ENCODE measurements at regions of chr9 and their contacts with region 1.

Region 1: DNA sequence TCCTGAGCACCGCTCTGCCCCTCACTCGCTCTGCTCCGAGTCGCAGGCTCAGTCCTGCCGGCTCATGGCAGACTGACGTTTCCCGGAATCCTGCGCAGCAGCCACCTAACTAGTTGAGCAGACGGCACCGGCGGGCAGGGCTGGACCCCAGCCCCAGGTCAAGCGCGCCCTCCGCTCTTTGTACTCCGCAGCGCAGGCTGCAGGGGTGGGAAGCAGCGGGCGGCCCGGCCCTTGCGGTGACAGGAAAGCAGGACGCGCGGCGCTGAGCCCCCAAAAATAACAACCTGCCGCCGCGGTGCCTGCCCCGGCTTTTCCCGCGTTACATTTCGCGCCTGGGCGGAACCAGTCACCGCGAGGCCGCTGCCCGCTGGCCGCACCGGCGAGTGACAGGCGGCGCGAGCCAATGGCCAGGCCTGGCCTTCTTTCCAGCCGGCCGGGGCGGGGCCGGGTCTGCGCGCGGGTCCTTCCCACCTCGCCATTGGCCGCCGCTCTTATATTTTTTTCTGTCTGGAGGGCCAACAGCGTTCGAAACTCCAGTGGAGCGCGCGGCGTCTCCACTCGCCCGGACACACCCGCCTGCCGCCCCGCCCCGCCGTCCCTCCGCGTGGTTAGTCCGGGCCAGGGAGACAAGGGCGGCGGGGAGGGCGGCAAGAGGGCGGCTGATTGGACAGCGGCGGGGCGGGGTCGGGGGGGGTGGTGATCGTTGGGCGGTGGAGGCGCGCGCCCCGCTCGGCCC is at the start of gene ZNF367:
- DNase-seq: peak; percentile 99
- ATAC-seq: peak; percentile 93
- total RNA-seq, gene ZNF367: 4.3 TPM

Region 2: GRCh38 chr9:95764533-95765319 is 653.5 kb before region 1 on chr9:
- intact Hi-C with region 1: no loop called
- DNase-seq: no peak
- ATAC-seq: no peak

Region 3: DNA sequence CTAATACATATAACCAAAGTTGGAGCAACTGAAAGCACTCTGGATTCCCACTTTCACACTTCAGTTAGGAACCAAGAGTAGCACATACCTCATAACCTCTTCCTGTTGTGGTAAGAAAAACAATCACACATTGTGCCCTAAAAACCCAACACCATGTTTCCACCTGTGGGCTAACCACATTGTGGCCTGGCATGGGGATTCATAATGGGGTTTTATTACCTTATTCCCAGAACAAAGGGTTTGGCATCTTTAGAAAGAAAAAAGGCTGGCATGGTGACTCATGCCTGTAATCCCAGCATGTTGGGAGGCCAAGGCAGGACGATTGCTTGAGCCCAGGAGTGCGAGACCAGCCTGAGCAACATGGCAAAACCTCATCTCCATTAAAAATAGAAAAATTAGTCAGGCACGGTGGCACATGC is 176.8 kb before region 1 on chr9:
- intact Hi-C with region 1: no loop called
- DNase-seq: no peak
- ATAC-seq: no peak

Region 4: DNA sequence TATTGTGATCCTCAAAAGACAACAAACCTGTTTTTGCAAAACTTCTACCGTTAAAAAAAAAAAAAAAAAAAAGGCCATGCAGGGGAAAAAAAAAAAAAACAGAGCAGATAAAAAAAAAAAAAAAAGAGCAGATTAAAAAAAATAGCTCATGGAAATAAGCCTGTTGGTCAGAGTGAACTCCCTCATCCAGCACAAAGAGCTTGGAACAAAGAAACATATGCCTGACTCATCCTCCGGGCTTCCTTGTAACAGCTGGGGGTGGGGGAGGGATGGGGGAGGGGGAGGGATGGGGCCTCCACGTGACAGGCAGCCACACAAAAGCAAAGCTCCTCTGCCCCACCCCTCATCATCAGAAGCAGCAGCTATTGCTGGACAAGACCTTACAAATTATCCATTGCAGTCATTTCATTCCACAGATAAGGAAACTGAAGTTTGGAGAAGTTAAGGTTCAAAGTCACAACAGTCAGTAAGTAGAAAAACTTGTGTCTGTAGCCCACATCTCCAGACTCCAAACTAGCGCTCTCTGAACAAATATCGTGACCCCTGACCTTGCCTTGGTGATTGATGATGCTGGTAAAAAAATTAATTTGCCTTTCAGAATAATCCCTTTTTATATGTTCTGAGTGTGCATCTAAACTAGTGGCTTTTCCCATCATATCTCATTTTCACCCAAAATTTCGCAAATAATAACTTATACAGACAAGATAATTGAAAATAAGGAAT is 73.6 kb before region 1 on chr9:
- intact Hi-C with region 1: loop called (anchors 5 kb)
- DNase-seq: no peak
- ATAC-seq: peak; percentile 72

Region 5: GRCh38 chr9:96383165-96383942 is 34.9 kb before region 1 on chr9 and contains the start of gene SLC35D2:
- intact Hi-C with region 1: loop called (anchors 2 kb)
- DNase-seq: peak; percentile 84
- ATAC-seq: peak; percentile 96
- total RNA-seq, gene SLC35D2: 14.7 TPM